Activated CD4-positive, alpha-beta T cell treated with anti-CD3 and anti-CD28 coated beads, Interleukin-2, amount 10 ng/mL, durations not matched to agents 7 days and 5 days (primary cell): ENCODE measurements at regions of chr6 and their contacts with region 1.

Region 1: GRCh38 chr6:159110013-159110412 is 59.2 kb upstream of the FNDC1 start:
- DNase-seq: peak; percentile 53
- H3K4me3 Mint-ChIP-seq: no peak overlapping the region
- H3K27ac Mint-ChIP-seq: no peak overlapping the region
- H3K4me1 Mint-ChIP-seq: peaks cover 61% of the 10 kb centered on the region
- H3K27me3 Mint-ChIP-seq: no peaks in the 10 kb centered on the region

Region 2: GRCh38 chr6:158653577-158654354 is 456.2 kb before region 1 on chr6:
- CTCF ChIA-PET with region 1: no interaction called
- POLR2A ChIA-PET with region 1: no interaction called
- DNase-seq: peak; percentile 96
- H3K4me3 Mint-ChIP-seq: peak overlapping the region; percentile 71
- H3K27ac Mint-ChIP-seq: peak overlapping the region; percentile 98
- H3K4me1 Mint-ChIP-seq: peaks cover 75% of the 10 kb centered on the region
- H3K27me3 Mint-ChIP-seq: no peaks in the 10 kb centered on the region

Region 3: GRCh38 chr6:159125014-159125609 is 15.1 kb after region 1 on chr6:
- CTCF ChIA-PET with region 1: interaction called, 16 read pairs
- POLR2A ChIA-PET with region 1: no interaction called
- DNase-seq: no peak
- H3K4me3 Mint-ChIP-seq: no peak overlapping the region
- H3K27ac Mint-ChIP-seq: no peak overlapping the region
- H3K4me1 Mint-ChIP-seq: no peaks in the 10 kb centered on the region
- H3K27me3 Mint-ChIP-seq: peaks cover 9% of the 10 kb centered on the region

Region 4: GRCh38 chr6:159143101-159143500 is 33.1 kb after region 1 on chr6:
- CTCF ChIA-PET with region 1: no interaction called
- POLR2A ChIA-PET with region 1: no interaction called
- DNase-seq: no peak
- H3K4me3 Mint-ChIP-seq: no peak overlapping the region
- H3K27ac Mint-ChIP-seq: no peak overlapping the region
- H3K4me1 Mint-ChIP-seq: no peaks in the 10 kb centered on the region
- H3K27me3 Mint-ChIP-seq: peaks cover 35% of the 10 kb centered on the region

Region 5: GRCh38 chr6:159238920-159239558 is 129.0 kb after region 1 on chr6:
- CTCF ChIA-PET with region 1: no interaction called
- POLR2A ChIA-PET with region 1: no interaction called
- DNase-seq: no peak
- H3K4me3 Mint-ChIP-seq: no peak overlapping the region
- H3K27ac Mint-ChIP-seq: no peak overlapping the region
- H3K4me1 Mint-ChIP-seq: no peaks in the 10 kb centered on the region
- H3K27me3 Mint-ChIP-seq: peaks cover 29% of the 10 kb centered on the region